ENCODE measurements at regions of chr11 and their contacts with region 1.

Region 1: GRCh38 chr11:118956094-118956846 is at the start of gene UPK2:
- DNase-seq: peak; percentile 77
- H3K4me3 Mint-ChIP-seq: no peak within 1 kb of the TSS
- H3K27ac Mint-ChIP-seq: peak within 1 kb of the TSS; percentile 36
- H3K4me1 Mint-ChIP-seq: peaks cover 7% of the 10 kb centered on the region
- H3K27me3 Mint-ChIP-seq: peaks cover 20% of the 10 kb centered on the region
- total RNA-seq, gene UPK2: not detected in 2 replicates

Region 2: DNA sequence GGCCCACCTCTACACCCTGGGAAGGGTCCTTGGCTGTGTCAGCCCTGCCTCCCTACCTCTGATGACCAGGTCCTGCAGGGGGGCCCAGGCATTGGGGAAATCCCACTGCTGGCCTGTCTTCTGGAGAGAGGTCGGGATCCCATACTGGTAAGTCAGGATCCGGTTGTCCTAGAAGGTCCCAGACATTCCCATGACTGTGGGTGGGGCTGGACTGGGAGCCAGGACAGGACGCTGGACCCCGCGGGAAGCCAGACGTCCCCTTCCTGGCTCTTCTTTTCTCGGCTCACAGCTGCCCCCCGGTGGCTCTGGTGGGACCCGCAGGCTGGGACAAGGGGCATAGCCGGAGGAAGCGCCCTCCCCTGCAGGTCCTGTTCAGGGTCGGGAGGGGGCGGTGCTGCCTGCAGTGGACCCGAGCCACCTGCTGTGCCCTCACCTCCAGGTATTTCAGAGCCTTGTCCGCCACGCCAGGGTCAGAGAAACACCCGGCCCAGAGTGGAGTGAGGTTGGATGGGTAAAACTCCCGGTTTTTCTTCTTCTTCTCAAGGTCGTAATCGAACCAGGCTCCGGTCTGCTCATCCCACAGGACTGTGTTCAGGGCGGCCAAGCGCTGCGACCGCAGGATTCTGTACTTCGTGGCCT is 296.8 kb before region 1 on chr11:
- intact Hi-C with region 1: loop called (anchors 1 kb)
- DNase-seq: peak; percentile 74
- H3K4me3 Mint-ChIP-seq: no peak overlapping the region
- H3K27ac Mint-ChIP-seq: no peak overlapping the region
- H3K4me1 Mint-ChIP-seq: no peaks in the 10 kb centered on the region
- H3K27me3 Mint-ChIP-seq: peaks cover 9% of the 10 kb centered on the region

Region 3: DNA sequence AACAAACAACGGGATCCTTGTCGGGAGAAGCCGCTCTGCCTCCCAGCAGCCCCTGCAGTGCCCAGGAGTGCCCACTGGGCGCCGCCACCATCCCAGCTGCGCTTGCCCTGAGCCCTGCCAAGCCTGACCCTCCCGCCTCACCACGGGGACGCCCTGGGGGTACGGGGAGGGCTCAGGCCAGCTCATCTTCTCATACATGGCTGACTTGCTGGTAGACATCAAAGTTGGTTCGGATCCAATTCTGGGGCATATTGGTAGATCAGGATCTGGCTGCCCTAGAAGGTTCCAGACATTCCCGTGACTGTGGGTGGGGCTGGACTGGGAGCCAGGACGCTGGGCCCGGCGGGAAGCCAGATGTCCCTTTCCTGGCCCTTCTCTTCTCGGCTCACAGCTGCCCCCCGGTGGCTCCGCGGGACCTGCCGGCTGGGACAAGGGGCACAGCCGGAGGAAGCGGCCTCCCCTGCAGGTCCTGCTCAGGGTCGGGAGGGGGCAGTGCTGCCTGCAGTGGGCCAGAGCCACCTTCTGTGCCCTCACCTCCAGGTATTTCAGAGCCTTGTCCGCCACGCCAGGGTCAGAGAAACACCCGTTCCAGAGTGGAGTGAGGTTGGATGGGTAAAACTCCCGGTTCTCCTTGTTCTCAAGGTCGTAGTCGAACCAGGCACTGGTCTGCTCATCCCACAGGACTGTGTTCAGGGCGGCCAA is 266.3 kb before region 1 on chr11:
- intact Hi-C with region 1: loop called (anchors 1 kb)
- DNase-seq: peak; percentile 72
- H3K4me3 Mint-ChIP-seq: peak overlapping the region; percentile 60
- H3K27ac Mint-ChIP-seq: peak overlapping the region; percentile 52
- H3K4me1 Mint-ChIP-seq: peaks cover 36% of the 10 kb centered on the region
- H3K27me3 Mint-ChIP-seq: peaks cover 10% of the 10 kb centered on the region

Region 4: DNA sequence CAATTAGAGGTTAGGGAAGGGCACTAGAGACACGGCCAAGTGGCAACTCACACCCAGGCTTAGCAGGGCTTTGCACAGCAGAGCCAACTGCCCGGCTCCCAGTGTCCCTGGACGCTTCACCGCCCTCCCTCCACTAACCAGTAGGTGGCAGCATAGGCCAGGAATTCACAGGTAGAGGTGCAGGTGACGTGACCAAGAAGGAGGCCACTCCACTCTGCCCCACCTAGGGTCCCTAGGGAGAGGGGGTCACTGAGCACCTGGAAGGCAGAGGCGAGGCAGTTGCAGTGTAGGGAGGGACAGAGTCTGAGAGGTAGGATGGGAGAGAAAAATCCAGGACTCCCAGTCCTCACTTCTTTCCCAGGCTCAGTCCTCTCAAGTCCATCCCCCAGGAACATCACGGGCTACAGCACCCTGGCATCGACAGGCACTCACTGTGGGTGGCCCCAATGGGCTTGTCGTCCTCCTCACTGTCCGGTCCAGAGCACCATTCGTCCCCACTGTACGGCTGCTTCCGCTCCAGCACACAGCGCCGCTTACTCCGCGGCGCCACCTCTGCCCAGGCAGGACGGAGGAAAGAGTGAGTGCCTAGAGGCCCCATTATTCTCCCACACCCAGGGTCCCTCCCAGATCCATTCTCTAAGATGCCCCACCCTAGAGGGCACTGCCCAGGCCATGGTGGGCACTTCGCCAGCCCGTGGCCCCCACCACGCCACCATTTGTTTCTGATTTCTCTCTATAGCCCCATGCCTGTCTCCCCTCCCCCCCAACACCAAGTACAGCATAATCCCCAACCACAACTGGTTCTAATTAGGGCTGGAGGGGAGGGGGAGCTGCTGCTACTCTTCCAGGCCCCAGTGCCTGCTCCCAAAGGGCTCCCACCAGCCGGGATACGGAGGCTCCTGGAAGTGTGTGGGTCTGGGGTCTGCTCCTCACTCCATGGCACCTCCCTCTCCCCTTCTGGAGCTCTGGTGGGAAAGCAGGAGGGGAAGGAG is 48.9 kb before region 1 on chr11:
- intact Hi-C with region 1: loop called (anchors 1 kb)
- DNase-seq: peak; percentile 80
- H3K4me3 Mint-ChIP-seq: no peak overlapping the region
- H3K27ac Mint-ChIP-seq: peak overlapping the region; percentile 40
- H3K4me1 Mint-ChIP-seq: peaks cover 19% of the 10 kb centered on the region
- H3K27me3 Mint-ChIP-seq: no peaks in the 10 kb centered on the region

Measured in activated T-helper 1 cell treated with anti-CD3 and anti-CD28 coated beads, Interleukin-12 subunit alpha, Interleukin-12 subunit beta, Interleukin-2, Interleukin-4 antibody, amounts not matched to agents 30 ng/mL and 10 ng/mL and 1 ng/mL, durations not matched to agents 14 hours and 24 hours and 36 hours (primary cell).